Sciatic nerve (tissue), 2 donors: ENCODE measurements at regions of chr20 and their contacts with region 1.

Region 1: GRCh38 chr20:35207950-35208611 is 18.4 kb upstream of the MMP24 start:
- DNase-seq: peak; percentile 92
- ATAC-seq: peak; percentile 95

Region 2: DNA sequence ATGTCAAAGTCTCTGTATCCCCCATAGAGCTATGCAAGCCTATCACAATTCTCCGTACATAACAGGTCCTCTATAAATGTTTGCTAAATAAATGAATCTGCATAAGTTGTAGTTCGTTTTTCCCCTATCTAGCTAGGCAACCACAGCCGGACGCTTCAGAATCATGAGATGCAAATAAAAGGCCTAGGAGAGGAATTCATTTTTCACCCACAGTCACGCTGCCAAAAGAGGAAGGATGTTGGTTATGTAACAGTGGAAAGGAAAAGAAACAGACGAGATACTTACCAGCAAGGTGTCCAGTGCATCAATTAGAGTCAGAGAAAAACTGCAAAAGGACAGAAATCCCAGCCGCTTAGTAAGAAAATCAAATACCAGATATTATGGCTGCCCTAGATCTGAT is 63.4 kb before region 1 on chr20:
- intact Hi-C with region 1: loop called (anchors 5 kb)
- DNase-seq: no peak
- ATAC-seq: no peak

Region 3: DNA sequence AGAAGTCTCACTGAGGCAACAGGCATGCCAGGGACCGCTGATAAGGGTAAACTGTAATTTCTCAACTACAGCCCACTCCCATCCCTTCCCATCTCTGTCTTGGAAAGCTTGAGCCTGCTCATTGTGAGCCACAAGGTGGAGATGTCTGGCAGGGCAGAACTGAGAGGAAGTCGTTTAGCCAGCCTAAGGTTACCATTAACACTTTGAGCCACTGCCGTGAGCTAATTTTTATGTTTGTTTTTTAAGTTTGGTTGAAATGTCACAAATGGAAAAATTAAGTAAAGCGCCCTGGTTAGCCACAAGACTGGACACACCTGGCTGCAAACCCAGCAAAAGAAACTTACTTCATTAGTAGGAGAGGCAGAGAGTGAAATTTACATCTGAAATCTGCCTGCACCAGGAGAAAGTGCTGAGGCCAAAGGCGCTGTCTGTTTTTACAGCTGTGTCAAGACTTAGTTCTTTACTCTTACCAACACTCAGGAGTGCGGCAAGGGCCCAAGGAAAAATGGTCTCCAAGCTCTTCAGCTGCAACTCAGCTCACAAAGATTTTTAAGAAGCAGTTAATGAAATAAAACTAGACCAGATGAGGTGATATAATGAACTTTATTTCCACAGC is 134.2 kb after region 1 on chr20:
- intact Hi-C with region 1: no loop called
- DNase-seq: no peak
- ATAC-seq: no peak

Region 4: DNA sequence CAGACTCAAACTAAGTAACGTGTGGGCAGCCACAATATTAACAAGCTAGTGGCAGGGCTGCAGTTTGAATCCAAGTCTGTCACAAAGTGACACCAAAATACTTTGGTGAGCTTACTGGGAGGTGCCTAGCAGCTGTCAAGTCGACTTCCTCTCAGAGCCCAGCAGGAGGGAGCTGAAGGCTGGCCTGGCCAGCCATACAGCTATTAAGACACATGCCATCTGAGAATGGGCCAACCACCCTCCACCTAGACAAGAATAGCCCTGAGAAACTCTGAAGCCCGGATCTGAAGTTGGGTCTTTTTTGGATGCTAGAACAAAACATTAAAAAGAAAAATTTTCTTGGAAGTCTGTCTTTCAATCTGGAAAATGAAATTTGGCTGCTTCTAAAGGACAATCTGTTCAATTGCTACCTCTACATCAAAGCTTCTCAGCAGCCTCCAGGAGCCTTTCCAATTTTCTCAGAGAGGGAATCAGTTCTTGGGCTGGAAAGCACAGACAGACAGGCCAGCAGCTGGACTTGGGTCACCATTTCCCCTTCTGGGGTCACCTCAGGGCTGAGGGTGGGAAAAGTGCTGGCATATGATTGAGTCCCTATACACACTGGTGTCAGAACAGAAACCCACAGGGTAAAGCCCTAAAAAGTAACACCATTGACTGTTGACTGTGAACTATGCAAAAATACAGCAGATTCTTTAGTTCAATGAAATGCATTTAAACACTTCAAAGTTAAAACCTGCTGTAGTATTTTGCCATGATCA is 160.8 kb after region 1 on chr20:
- intact Hi-C with region 1: no loop called
- DNase-seq: no peak
- ATAC-seq: no peak